ENCODE measurements at regions of chr14 and their contacts with region 1.

Region 1: DNA sequence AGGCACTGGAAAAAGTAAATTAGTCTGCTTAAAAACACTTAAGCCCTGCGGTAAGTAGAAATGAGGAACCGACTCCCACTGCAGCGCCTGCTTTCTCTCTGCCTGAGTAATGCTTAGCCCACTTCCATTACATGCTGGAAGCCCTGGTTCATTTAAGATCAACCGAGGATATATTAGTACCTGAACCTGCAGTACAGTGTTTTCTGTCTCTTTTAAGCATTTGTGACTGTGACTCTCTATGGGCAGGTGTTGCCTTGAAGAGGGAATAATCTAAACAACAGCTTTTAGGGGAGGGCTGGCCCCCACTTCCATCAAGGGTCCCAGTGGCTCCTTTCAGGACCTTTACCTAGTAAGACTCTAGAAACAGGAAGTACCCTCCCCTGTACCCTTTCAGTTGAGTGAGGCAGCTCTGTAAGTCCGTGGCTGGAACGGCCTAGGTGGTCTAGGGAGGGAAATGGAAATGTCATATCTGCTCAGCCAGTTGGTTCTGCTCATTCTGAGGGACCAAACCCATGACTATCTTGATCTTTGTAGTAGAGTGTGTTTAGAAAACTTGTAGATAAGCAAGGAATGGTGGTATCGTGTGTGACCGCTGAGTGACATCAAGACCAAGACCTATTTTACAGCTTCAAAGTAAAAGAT is 56.2 kb downstream of the FNTB start:
- DNase-seq: no peak
- ATAC-seq: no peak
- H3K4me3 Mint-ChIP-seq: no peak overlapping the region
- H3K27ac Mint-ChIP-seq: no peak overlapping the region
- H3K4me1 Mint-ChIP-seq: peaks cover 7% of the 10 kb centered on the region
- H3K27me3 Mint-ChIP-seq: no peaks in the 10 kb centered on the region
- CTCF ChIP-seq: no peak

Region 2: DNA sequence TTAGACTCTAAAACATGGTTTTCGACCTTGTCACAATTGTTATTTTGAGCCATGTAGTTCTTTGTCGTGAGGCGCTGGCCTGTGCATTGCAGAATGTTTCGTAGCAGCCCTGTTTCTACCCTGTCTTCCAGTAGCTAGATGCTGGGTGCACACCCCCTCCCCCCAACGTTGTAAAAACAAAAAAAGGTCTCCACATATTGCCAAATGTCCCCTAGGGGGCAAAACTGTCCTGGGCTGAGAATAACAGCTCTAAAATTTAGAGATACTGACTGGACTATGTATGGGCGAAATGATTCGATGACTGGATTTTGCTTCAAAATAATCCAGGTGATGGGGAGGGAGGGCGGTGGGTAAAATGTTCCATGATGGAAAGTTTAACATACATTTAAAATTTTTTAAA is 243.6 kb after region 1 on chr14:
- CTCF ChIA-PET with region 1: no interaction called
- POLR2A ChIA-PET with region 1: interaction called, 11 read pairs
- DNase-seq: no peak
- ATAC-seq: no peak
- H3K4me3 Mint-ChIP-seq: no peak overlapping the region
- H3K27ac Mint-ChIP-seq: no peak overlapping the region
- H3K4me1 Mint-ChIP-seq: peaks cover 34% of the 10 kb centered on the region
- H3K27me3 Mint-ChIP-seq: peaks cover 5% of the 10 kb centered on the region
- CTCF ChIP-seq: no peak